Lower leg skin (tissue), 4 donors: ENCODE measurements at regions of chr12 and their contacts with region 1.

Region 1: GRCh38 chr12:31406345-31406744 is 80.4 kb upstream of the SINHCAF start:
- DNase-seq: no peak
- H3K4me3 ChIP-seq: no peak overlapping the region
- CTCF ChIP-seq: no peak
- POLR2A ChIP-seq: no peak

Region 2: GRCh38 chr12:31634620-31635019 is 228.3 kb after region 1 on chr12:
- intact Hi-C with region 1: loop called (anchors 5 kb)
- DNase-seq: no peak
- H3K4me3 ChIP-seq: no peak overlapping the region
- CTCF ChIP-seq: no peak
- POLR2A ChIP-seq: no peak